Activated CD4-positive, alpha-beta T cell treated with anti-CD3 and anti-CD28 coated beads for 36 hours (primary cell): ENCODE measurements at regions of chr3 and their contacts with region 1.

Region 1: GRCh38 chr3:123584988-123585937 is at the start of gene HACD2:
- DNase-seq: peak; percentile 97
- ATAC-seq: peak; percentile 93
- H3K4me3 Mint-ChIP-seq: no peak within 1 kb of the TSS
- H3K27ac Mint-ChIP-seq: peak within 1 kb of the TSS; percentile 87
- H3K4me1 Mint-ChIP-seq: peaks cover 21% of the 10 kb centered on the region
- H3K27me3 Mint-ChIP-seq: no peaks in the 10 kb centered on the region
- total RNA-seq, gene HACD2: 22.1 to 27.7 TPM

Region 2: DNA sequence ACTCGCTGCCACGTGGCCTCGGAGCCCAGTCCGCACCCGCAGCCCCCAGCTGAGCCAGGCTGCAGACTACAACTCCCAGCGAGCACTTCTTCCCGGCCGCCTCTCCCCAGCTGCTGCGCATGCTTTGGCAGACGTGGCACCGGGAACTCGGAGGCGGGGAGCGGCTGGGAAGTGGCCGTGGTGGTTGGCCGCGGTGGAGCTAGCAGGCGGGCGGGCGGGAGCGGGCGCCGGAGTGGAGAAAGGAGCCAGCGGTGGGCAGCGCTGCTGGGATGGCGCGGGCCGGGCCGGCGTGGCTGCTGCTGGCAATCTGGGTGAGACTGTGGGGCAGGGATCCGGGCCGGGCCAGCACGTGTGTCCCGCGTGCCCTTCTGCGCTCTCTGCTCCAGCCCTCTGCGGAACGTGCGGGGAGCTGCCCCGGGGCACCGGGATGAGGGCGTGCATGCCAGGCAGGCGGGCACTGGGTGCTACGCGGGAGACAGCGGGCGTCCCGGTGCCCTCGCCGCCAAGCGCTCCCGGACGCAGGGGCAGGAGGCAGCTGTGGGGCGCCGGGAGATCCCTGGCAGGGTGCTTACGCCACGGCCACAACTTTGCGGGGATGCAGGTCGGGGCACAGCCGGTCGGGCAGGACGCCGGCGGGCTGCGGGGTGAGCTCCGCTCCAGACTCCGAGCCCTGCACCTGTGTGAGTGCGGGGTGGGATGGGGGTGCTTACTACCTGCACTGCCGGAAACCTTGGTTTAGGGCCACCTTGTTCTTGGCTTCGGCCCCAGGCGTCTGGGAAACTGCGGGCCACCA is 518.2 kb before region 1 on chr3 and contains the start of gene PDIA5:
- CTCF ChIA-PET with region 1: no interaction called
- POLR2A ChIA-PET with region 1: no interaction called
- intact Hi-C with region 1: loop called in 1 of 2 experiments (anchors 2 kb)
- DNase-seq: peak; percentile 87
- ATAC-seq: peak; percentile 83
- H3K4me3 Mint-ChIP-seq: peak within 1 kb of the TSS; percentile 87
- H3K27ac Mint-ChIP-seq: peak within 1 kb of the TSS; percentile 80
- H3K4me1 Mint-ChIP-seq: peaks cover 40% of the 10 kb centered on the region
- H3K27me3 Mint-ChIP-seq: no peaks in the 10 kb centered on the region
- total RNA-seq, gene PDIA5: 19.5 to 20.7 TPM

Region 3: GRCh38 chr3:123152687-123153086 is 432.6 kb before region 1 on chr3:
- CTCF ChIA-PET with region 1: no interaction called
- POLR2A ChIA-PET with region 1: no interaction called
- intact Hi-C with region 1: no loop called
- DNase-seq: no peak
- ATAC-seq: no peak
- H3K4me3 Mint-ChIP-seq: no peak overlapping the region
- H3K27ac Mint-ChIP-seq: no peak overlapping the region
- H3K4me1 Mint-ChIP-seq: no peaks in the 10 kb centered on the region
- H3K27me3 Mint-ChIP-seq: no peaks in the 10 kb centered on the region

Region 4: DNA sequence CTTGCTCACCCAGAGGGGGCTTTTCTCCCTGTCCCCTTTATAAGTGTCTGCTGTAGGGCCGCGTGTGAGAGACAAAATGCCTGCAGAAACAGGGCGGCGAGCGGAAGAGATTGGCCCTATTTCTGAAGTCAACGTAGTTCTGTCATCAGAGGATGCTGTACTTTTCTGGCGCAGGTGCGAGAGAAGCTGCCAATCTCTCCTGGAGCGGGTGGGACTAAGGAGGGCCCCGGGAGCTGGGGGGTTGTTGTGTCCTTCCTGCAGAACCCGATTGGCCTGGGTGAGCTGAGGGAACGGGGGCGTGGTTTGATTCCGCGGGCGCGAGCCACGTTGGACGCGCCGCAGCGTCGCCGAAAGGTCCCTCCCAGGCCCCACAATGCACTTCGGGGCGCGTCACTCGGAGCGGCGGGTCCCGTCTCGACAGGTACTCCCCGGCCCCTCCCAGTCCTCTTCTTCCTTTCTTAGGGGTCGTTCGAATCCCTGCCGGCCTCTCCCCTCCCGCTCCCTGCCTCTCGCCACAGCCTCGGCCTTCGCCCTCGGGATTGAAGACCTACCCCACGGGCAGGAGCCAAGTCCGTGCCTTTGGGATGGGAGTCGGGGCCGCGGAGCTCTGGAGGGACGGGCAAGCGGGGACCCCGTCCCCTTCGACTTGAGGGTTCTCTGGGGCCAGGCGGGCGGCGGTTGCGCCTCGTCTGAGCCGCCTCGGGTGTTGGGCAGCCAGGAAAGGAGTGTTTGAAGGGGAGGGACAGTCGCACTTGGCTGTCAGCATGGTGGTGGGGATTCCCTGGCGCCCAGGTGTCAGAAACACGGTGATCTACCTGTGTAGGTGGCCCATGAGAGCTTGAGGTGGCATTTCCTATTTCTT is 383.5 kb before region 1 on chr3 and contains the start of gene SEC22A:
- CTCF ChIA-PET with region 1: no interaction called
- POLR2A ChIA-PET with region 1: interaction called, 4 read pairs
- intact Hi-C with region 1: loop called (anchors 1 kb)
- DNase-seq: peak; percentile 98
- ATAC-seq: peak; percentile 99
- H3K4me3 Mint-ChIP-seq: peak within 1 kb of the TSS; percentile 96
- H3K27ac Mint-ChIP-seq: peak within 1 kb of the TSS; percentile 97
- H3K4me1 Mint-ChIP-seq: peaks cover 28% of the 10 kb centered on the region
- H3K27me3 Mint-ChIP-seq: no peaks in the 10 kb centered on the region
- total RNA-seq, gene SEC22A: 13.2 to 16.3 TPM

Region 5: DNA sequence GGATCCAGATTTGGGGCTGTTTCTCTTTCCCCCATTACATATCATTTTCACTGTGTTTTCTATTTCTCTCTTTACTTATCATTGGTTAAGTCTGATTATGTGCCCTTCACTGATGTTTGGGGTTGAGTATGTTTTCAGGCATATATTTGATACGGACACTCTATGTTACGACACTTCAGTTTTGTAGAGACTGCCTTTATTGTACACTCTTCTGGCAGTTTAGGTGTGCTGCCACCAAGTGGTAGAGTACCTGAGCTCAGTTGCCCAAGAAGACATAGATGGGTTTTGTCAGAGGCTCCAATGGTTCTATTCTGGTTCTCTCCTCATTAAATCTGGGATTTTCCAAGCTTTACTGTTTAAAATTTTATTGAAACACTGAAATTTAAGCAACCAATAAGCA is 661.7 kb after region 1 on chr3:
- CTCF ChIA-PET with region 1: no interaction called
- POLR2A ChIA-PET with region 1: no interaction called
- intact Hi-C with region 1: no loop called
- DNase-seq: peak; percentile 11
- ATAC-seq: no peak
- H3K4me3 Mint-ChIP-seq: no peak overlapping the region
- H3K27ac Mint-ChIP-seq: no peak overlapping the region
- H3K4me1 Mint-ChIP-seq: no peaks in the 10 kb centered on the region
- H3K27me3 Mint-ChIP-seq: peaks cover 17% of the 10 kb centered on the region

Region 6: DNA sequence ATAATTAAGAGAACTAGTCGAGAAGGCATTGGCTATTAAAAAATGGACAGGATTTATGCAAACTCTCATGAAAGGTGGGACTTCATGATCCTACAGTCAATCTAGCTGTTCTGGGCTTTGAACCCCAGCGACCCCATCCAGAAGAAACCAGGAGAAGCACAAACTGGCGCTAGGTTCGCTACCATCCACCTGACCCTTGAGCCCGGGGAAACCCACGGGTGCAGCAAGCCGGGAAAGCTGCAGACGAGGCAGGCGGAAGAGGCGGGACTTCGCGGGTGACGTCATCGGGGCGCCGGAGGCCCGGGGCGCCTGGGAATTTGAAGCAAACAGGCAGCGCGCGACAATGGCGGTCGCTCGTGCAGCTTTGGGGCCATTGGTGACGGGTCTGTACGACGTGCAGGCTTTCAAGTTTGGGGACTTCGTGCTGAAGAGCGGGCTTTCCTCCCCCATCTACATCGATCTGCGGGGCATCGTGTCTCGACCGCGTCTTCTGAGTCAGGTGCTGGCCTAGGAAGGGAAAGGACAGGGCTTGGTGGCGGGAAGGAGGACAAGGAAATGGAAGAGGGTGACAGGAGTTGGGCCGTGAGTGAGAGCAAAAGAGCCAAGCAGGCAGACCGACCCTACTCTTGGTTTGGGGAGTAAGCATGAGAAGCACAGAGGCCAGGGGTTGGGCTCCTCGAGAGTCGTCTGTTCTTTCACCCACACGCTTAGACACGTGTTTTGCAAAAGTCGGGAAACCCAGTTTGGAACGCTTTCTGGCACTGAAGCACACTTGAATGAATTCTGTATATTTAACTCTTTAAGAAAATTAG is 1145.1 kb after region 1 on chr3 and contains the start of gene UMPS:
- CTCF ChIA-PET with region 1: no interaction called
- POLR2A ChIA-PET with region 1: no interaction called
- intact Hi-C with region 1: loop called in 1 of 2 experiments (anchors 1 kb)
- DNase-seq: peak; percentile 97
- ATAC-seq: peak; percentile 99
- H3K4me3 Mint-ChIP-seq: peak within 1 kb of the TSS; percentile 100
- H3K27ac Mint-ChIP-seq: peak within 1 kb of the TSS; percentile 100
- H3K4me1 Mint-ChIP-seq: peaks cover 32% of the 10 kb centered on the region
- H3K27me3 Mint-ChIP-seq: peaks cover 7% of the 10 kb centered on the region
- total RNA-seq, gene UMPS: 35.9 to 42.4 TPM